ENCODE measurements at regions of chr17 and their contacts with region 1.

Region 1: GRCh38 chr17:72539981-72540897 is 419.4 kb downstream of the SOX9 start:
- DNase-seq: peak; percentile 61 to 80
- ATAC-seq: peak; percentile 91 to 98 (median 94)
- H3K4me3 ChIP-seq: peak overlapping the region in 5 of 10 donors; percentile 21 to 30 (median 24)
- H3K27ac ChIP-seq: peak overlapping the region in 3 of 10 donors; percentile 31 to 63 (median 50)
- H3K4me1 ChIP-seq: peaks cover 0 to 10% (median 4%) of the 10 kb centered on the region in 9 donors
- H3K27me3 ChIP-seq: peaks cover 0 to 19% (median 12%) of the 10 kb centered on the region in 7 donors
- CTCF ChIP-seq: peak; percentile 79 to 98 (median 87)

Region 2: DNA sequence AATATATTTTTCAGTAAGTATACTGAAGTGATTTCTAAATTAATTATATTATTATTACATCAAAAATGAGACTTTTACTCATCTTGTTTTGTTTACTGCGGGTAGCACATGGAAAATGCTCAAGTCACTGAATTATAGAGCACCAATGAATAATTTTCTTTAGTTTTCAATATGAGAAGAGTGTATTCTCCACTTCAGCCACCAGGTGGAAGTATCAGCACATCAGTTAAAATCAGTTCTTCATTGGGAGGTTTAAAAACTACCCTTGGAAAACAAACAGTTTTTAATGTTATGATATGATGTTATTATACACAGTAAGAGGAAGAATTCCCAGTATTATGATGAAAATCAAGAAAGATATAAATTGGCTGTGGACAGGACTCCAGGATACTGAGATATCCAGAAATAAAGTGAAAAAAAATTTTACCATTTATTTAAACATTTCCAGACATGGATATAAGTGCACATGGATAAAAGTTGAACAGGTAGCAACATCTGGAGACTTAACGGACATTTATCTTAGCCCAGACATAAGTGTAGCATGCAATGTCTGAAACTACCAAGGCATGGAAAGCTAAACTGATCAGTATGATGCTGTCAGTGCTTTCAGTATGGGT is 1903.6 kb before region 1 on chr17:
- intact Hi-C with region 1: loop called in 8 of 10 experiments (anchors 2 to 10 kb)
- DNase-seq: peak in 1 of 2 donors; percentile 12
- ATAC-seq: no peak
- H3K4me3 ChIP-seq: no peak overlapping the region
- H3K27ac ChIP-seq: no peak overlapping the region
- H3K4me1 ChIP-seq: no peaks in the 10 kb centered on the region
- H3K27me3 ChIP-seq: peaks cover 0 to 9% (median 0%) of the 10 kb centered on the region in 7 donors
- CTCF ChIP-seq: peak; percentile 65 to 85 (median 79)

Region 3: DNA sequence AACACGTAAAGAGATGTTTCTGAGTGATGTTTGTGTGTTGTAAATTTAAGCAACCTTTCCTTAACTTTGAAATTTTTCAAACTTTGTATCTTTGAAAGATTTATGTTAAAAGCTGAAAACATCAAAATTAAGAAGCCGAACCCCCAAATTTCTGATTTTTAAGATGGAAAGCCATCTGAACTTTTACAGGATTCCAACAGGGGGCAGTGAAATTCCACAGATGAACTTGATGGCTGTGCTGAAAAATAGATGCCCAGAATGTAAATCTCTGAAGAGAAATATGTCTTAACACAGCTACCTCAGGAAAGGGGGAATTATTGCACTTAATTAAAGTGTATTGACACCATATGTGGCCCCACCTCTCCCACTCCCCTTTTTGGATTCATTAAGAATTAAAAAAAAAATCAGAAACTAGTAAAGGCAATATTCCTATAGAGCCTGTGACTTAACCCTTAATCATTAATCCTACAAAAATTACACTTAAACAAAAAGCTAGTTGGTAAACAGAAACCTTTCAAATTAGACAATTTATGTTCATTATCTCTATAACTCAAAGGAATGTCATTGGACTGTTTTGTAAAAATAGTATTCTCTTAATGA is 1773.0 kb before region 1 on chr17:
- intact Hi-C with region 1: loop called in 3 of 10 experiments (anchors 10 kb)
- DNase-seq: no peak
- ATAC-seq: no peak
- H3K4me3 ChIP-seq: no peak overlapping the region
- H3K27ac ChIP-seq: no peak overlapping the region
- H3K4me1 ChIP-seq: no peaks in the 10 kb centered on the region
- H3K27me3 ChIP-seq: no peaks in the 10 kb centered on the region
- CTCF ChIP-seq: peak in 8 of 9 donors; percentile 27 to 64 (median 56)

Region 4: DNA sequence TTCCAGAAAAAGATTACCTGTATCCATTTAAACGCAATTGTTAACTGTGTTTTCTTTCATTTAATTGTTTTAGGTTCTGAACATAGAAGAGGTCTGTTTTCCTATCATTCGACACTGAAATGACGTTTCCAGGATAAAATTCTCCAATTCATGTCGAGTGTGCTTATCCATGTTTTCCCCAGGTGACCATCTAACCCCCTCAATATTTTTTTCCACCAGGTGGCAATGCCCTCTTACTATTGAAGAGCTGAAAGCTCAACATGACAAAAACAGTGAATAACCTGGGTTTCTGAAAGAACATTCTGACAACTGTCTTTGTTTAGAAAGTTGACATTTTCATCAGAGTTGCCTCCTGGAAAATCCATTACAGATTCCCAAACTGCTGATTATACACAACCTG is 1422.2 kb before region 1 on chr17:
- intact Hi-C with region 1: loop called in 8 of 10 experiments (anchors 2 to 10 kb)
- DNase-seq: no peak
- ATAC-seq: no peak
- H3K4me3 ChIP-seq: no peak overlapping the region
- H3K27ac ChIP-seq: no peak overlapping the region
- H3K4me1 ChIP-seq: no peaks in the 10 kb centered on the region
- H3K27me3 ChIP-seq: peaks cover 0 to 5% (median 0%) of the 10 kb centered on the region in 7 donors
- CTCF ChIP-seq: peak; percentile 15 to 56 (median 45)

Region 5: GRCh38 chr17:71472809-71473789 is 1067.1 kb before region 1 on chr17:
- intact Hi-C with region 1: loop called in 5 of 10 experiments (anchors 2 to 10 kb)
- DNase-seq: peak in 1 of 2 donors; percentile 6
- ATAC-seq: peak in 3 of 8 donors; percentile 34 to 78 (median 35)
- H3K4me3 ChIP-seq: no peak overlapping the region
- H3K27ac ChIP-seq: no peak overlapping the region
- H3K4me1 ChIP-seq: no peaks in the 10 kb centered on the region
- H3K27me3 ChIP-seq: peaks cover 0 to 13% (median 0%) of the 10 kb centered on the region in 7 donors
- CTCF ChIP-seq: peak; percentile 30 to 65 (median 56)

Region 6: GRCh38 chr17:71482625-71483024 is 1057.6 kb before region 1 on chr17:
- intact Hi-C with region 1: loop called in 3 of 10 experiments (anchors 10 kb)
- DNase-seq: no peak
- ATAC-seq: no peak
- H3K4me3 ChIP-seq: no peak overlapping the region
- H3K27ac ChIP-seq: no peak overlapping the region
- H3K4me1 ChIP-seq: no peaks in the 10 kb centered on the region
- H3K27me3 ChIP-seq: peaks cover 0 to 3% (median 0%) of the 10 kb centered on the region in 7 donors
- CTCF ChIP-seq: no peak

Region 7: GRCh38 chr17:72407336-72407909 is 132.8 kb before region 1 on chr17:
- intact Hi-C with region 1: no loop called
- DNase-seq: peak; percentile 21 to 48
- ATAC-seq: peak; percentile 62 to 88 (median 74)
- H3K4me3 ChIP-seq: no peak overlapping the region
- H3K27ac ChIP-seq: no peak overlapping the region
- H3K4me1 ChIP-seq: peaks cover 0 to 16% (median 8%) of the 10 kb centered on the region in 9 donors
- H3K27me3 ChIP-seq: peaks cover 0 to 8% (median 0%) of the 10 kb centered on the region in 7 donors
- CTCF ChIP-seq: no peak